K562 (cell line): ENCODE measurements at regions of chr12 and their contacts with region 1.

Region 1: GRCh38 chr12:57452937-57453509 is 2.1 kb upstream of the INHBE start:
- DNase-seq: peak; percentile 68 to 89 (median 71)
- ATAC-seq: peak; percentile 50
- H3K4me3 ChIP-seq: no peak overlapping the region
- H3K27ac ChIP-seq: peak overlapping the region; percentile 17; the same call in 1 of the 3 replicates
- H3K4me1 ChIP-seq: peaks cover 30 to 43% of the 10 kb centered on the region in 2 experiments
- H3K27me3 ChIP-seq: no peaks in the 10 kb centered on the region
- CTCF ChIP-seq: peak; percentile 95 to 98 (median 96)
- EP300 ChIP-seq: no peak
- POLR2A ChIP-seq: no peak
- RAD21 ChIP-seq: peak; percentile 96 to 98

Region 2: DNA sequence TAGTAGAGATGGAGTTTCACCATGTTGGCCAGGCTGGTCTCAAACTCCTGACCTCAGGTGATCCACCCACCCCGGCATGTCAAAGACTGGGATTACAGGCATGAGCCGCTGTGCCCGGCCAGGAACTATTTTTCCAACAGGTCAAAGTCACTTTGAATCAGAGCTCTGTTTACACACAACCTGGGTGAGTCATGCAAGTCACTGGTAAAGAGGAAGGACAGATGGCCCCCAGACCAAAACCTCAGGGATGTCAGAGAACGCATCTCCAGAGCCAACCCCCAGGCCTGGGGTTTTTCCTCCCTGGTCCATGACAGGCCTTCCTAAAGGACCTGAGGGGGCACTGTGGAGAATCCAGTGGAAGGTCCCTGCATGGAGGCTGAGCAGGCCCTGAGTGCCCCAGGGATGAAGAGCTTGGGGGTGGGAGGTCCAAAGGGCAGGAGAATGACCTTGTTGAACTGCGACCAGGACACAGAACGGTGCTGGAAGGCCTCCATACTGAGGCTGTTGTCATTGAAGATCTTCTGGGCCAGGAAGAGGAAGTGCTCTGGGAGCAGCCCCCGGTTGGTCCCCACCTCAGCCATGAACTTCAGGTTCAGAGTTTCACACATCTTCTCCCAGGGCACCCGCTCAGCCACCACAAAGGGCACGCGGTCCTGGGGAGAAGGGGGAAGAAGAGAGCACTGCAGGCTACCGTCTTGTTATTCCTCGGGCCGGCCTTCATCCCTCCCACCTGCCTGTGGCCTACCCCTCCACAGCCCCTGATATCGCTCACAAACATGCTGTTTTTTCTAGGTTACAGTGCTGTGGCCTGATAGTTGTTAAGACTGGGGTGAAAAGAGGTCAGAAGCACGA is 351.0 kb before region 1 on chr12:
- CTCF ChIA-PET with region 1: no interaction called
- POLR2A ChIA-PET with region 1: no interaction called
- in situ Hi-C with region 1: no loop called
- intact Hi-C with region 1: no loop called
- DNase-seq: peak; percentile 64 to 84 (median 74)
- ATAC-seq: peak; percentile 83
- H3K4me3 ChIP-seq: no peak overlapping the region
- H3K27ac ChIP-seq: peak overlapping the region; percentile 76
- H3K4me1 ChIP-seq: peaks cover 33 to 65% of the 10 kb centered on the region in 2 experiments
- H3K27me3 ChIP-seq: no peaks in the 10 kb centered on the region
- CTCF ChIP-seq: 0 out of 6 replicates have a peak, but pooled peaks of 1 of the 3 experiments have one; percentile 16
- EP300 ChIP-seq: peak; percentile 41; the same call in 1 of the 2 replicates
- POLR2A ChIP-seq: 0 out of 2 replicates have a peak, but pooled peaks have one; percentile 38
- RAD21 ChIP-seq: no peak

Region 3: GRCh38 chr12:57213058-57213715 is 239.8 kb before region 1 on chr12:
- CTCF ChIA-PET with region 1: interaction called, 12 read pairs
- POLR2A ChIA-PET with region 1: interaction called, 5 read pairs
- in situ Hi-C with region 1: no loop called
- intact Hi-C with region 1: loop called (anchors 2 kb)
- DNase-seq: peak; percentile 84 to 94 (median 90)
- ATAC-seq: peak; percentile 81
- H3K4me3 ChIP-seq: no peak overlapping the region
- H3K27ac ChIP-seq: no peak overlapping the region
- H3K4me1 ChIP-seq: peaks cover 17 to 56% of the 10 kb centered on the region in 2 experiments; a peak in 4 of 5 replicates
- H3K27me3 ChIP-seq: peaks cover 24 to 71% of the 10 kb centered on the region in 2 experiments; a peak in 4 of 5 replicates
- CTCF ChIP-seq: peak; percentile 89 to 97 (median 92)
- EP300 ChIP-seq: no peak
- POLR2A ChIP-seq: no peak
- RAD21 ChIP-seq: peak; percentile 78 to 85

Region 4: GRCh38 chr12:57263096-57263495 is 189.9 kb before region 1 on chr12:
- CTCF ChIA-PET with region 1: interaction called, 20 read pairs
- POLR2A ChIA-PET with region 1: interaction called, 6 read pairs
- in situ Hi-C with region 1: no loop called
- intact Hi-C with region 1: loop called (anchors 1 kb)
- DNase-seq: no peak
- ATAC-seq: no peak
- H3K4me3 ChIP-seq: no peak overlapping the region
- H3K27ac ChIP-seq: no peak overlapping the region
- H3K4me1 ChIP-seq: peaks cover 0 to 3% of the 10 kb centered on the region in 2 experiments; a peak in 2 of 5 replicates
- H3K27me3 ChIP-seq: no peaks in the 10 kb centered on the region
- CTCF ChIP-seq: no peak
- EP300 ChIP-seq: no peak
- POLR2A ChIP-seq: no peak
- RAD21 ChIP-seq: no peak

Region 5: DNA sequence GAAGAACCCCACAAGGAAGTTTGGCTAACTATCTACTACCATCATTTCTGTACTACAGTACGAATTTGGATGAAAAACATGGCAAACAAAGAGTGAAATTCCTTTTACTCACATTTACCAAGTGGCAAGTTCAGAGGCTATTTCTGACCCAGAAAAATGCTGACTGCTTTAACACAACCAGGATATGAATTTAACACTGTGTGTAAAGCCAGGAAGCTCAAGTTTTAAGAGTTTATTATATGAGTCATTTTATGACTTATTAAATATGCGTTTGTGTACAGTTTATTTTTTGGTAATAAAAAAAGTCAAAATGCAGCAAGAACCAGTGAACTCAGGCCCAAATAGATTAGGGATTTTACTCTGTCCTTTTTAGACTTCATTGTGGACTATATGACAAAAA is 143.6 kb before region 1 on chr12:
- CTCF ChIA-PET with region 1: interaction called, 15 read pairs
- POLR2A ChIA-PET with region 1: interaction called, 7 read pairs
- in situ Hi-C with region 1: loop called (anchors 5 kb)
- intact Hi-C with region 1: loop called (anchors 1 kb)
- DNase-seq: no peak
- ATAC-seq: no peak
- H3K4me3 ChIP-seq: no peak overlapping the region
- H3K27ac ChIP-seq: no peak overlapping the region
- H3K4me1 ChIP-seq: peaks cover 5 to 8% of the 10 kb centered on the region in 2 experiments; a peak in 2 of 5 replicates
- H3K27me3 ChIP-seq: no peaks in the 10 kb centered on the region
- CTCF ChIP-seq: no peak
- EP300 ChIP-seq: no peak
- POLR2A ChIP-seq: no peak
- RAD21 ChIP-seq: no peak

Region 6: GRCh38 chr12:57430931-57431720 is 21.9 kb before region 1 on chr12 and contains the start of gene R3HDM2:
- CTCF ChIA-PET with region 1: no interaction called
- POLR2A ChIA-PET with region 1: interaction called, 6 read pairs
- in situ Hi-C with region 1: no loop called
- intact Hi-C with region 1: loop called (anchors 2 kb)
- DNase-seq: peak in 2 of 4 experiments; percentile 96 to 98
- ATAC-seq: peak; percentile 94
- H3K4me3 ChIP-seq: peak within 1 kb of the TSS; percentile 59
- H3K27ac ChIP-seq: peak within 1 kb of the TSS; percentile 98
- H3K4me1 ChIP-seq: peaks cover 17 to 18% of the 10 kb centered on the region in 2 experiments; a peak in 4 of 5 replicates
- H3K27me3 ChIP-seq: no peaks in the 10 kb centered on the region
- CTCF ChIP-seq: no peak
- EP300 ChIP-seq: 0 out of 2 replicates have a peak, but pooled peaks have one; percentile 8
- POLR2A ChIP-seq: peak; percentile 90
- RAD21 ChIP-seq: 0 out of 4 replicates have a peak, but pooled peaks of 1 of the 2 experiments have one; percentile 11
- polyA plus RNA-seq, gene R3HDM2: 3.3 to 3.7 TPM